ENCODE measurements at regions of chr4 and their contacts with region 1.

Region 1: DNA sequence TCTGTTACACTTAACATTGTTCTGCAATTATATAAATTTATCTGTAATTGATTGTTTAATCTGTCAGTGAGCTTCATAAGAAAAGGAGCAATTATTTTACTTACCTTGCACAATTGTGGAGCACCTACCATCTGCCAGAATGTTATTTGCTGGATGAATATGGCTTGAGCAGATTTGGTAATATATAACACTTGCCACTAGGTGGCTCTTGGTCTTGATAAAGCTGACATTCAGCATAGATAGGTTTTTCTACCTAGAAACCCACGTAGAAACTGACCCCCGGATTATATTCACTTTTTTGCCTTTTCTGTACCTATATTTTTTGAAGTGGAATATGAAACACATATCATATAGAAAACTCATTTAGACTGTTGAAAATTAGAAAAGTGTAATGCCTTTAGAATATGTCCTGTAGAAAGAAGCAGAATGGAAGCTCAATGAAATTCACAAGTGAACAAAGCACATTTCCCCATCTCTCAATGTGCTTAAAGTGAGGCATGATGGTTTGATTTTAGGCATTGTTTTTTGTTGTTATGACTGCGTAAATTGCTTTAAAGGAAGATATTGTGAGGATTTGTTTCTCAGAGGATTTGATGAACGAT is 9.5 kb downstream of the RBPJ start:
- DNase-seq: no peak
- ATAC-seq: peak; percentile 88
- H3K4me3 ChIP-seq: no peak overlapping the region
- H3K27ac ChIP-seq: no peak overlapping the region
- H3K4me1 ChIP-seq: no peaks in the 10 kb centered on the region
- H3K27me3 ChIP-seq: no peaks in the 10 kb centered on the region
- CTCF ChIP-seq: peak; percentile 53 to 66 (median 58)
- EP300 ChIP-seq: no peak
- POLR2A ChIP-seq: no peak
- RAD21 ChIP-seq: peak; percentile 71

Region 2: GRCh38 chr4:26028793-26029567 is 301.3 kb before region 1 on chr4:
- CTCF ChIA-PET with region 1: interaction called, 18 read pairs
- POLR2A ChIA-PET with region 1: no interaction called
- RAD21 ChIA-PET with region 1: interaction called, 15 read pairs
- SMC1A ChIA-PET with region 1: interaction called, 17 read pairs
- in situ Hi-C with region 1: no loop called
- intact Hi-C with region 1: no loop called
- DNase-seq: no peak
- ATAC-seq: peak; percentile 99
- H3K4me3 ChIP-seq: no peak overlapping the region
- H3K27ac ChIP-seq: no peak overlapping the region
- H3K4me1 ChIP-seq: peaks cover 4% of the 10 kb centered on the region
- H3K27me3 ChIP-seq: no peaks in the 10 kb centered on the region
- CTCF ChIP-seq: peak; percentile 75 to 89 (median 85)
- EP300 ChIP-seq: no peak
- POLR2A ChIP-seq: no peak
- RAD21 ChIP-seq: peak; percentile 93

Region 3: GRCh38 chr4:26076000-26076587 is 254.2 kb before region 1 on chr4:
- CTCF ChIA-PET with region 1: interaction called, 14 read pairs
- POLR2A ChIA-PET with region 1: interaction called, 6 read pairs
- RAD21 ChIA-PET with region 1: interaction called, 37 read pairs
- SMC1A ChIA-PET with region 1: interaction called, 12 read pairs
- in situ Hi-C with region 1: no loop called
- intact Hi-C with region 1: no loop called
- DNase-seq: peak; percentile 84
- ATAC-seq: peak; percentile 75
- H3K4me3 ChIP-seq: no peak overlapping the region
- H3K27ac ChIP-seq: peak overlapping the region; percentile 57
- H3K4me1 ChIP-seq: peaks cover 35% of the 10 kb centered on the region
- H3K27me3 ChIP-seq: no peaks in the 10 kb centered on the region
- CTCF ChIP-seq: no peak
- EP300 ChIP-seq: peak; percentile 70 to 90
- POLR2A ChIP-seq: no peak
- RAD21 ChIP-seq: no peak

Region 4: GRCh38 chr4:26372525-26373172 is 42.4 kb after region 1 on chr4:
- CTCF ChIA-PET with region 1: interaction called, 15 read pairs
- POLR2A ChIA-PET with region 1: no interaction called
- RAD21 ChIA-PET with region 1: interaction called, 5 read pairs
- SMC1A ChIA-PET with region 1: no interaction called
- in situ Hi-C with region 1: no loop called
- intact Hi-C with region 1: no loop called
- DNase-seq: peak; percentile 83
- ATAC-seq: peak; percentile 93
- H3K4me3 ChIP-seq: no peak overlapping the region
- H3K27ac ChIP-seq: no peak overlapping the region
- H3K4me1 ChIP-seq: peaks cover 15% of the 10 kb centered on the region
- H3K27me3 ChIP-seq: no peaks in the 10 kb centered on the region
- CTCF ChIP-seq: no peak
- EP300 ChIP-seq: peak; percentile 27 to 47; a peak in 1 of 4 replicates
- POLR2A ChIP-seq: no peak
- RAD21 ChIP-seq: no peak

Region 5: DNA sequence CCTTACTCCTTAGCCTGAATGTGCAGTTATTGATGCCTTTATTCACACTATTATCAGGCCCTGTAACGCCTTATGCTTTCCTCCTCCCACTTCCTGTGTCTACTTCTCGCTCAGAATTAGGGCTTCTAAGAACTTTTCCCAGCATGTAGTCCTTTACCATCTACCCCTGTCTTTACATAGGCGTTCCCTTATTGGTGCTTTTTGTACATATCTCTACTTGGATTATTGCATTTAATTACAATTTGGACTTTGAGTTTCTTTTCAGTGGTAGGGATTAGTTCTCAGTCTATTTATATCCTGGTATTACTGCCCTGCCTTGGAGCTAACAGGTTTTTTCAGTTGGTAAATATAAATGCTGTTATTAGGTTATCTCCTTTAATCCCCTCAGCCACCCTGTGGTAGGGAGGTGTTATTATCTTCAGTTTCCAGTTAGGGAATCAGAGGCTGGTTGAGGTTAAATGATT is 74.5 kb after region 1 on chr4:
- CTCF ChIA-PET with region 1: interaction called, 474 read pairs
- POLR2A ChIA-PET with region 1: interaction called, 3 read pairs
- RAD21 ChIA-PET with region 1: interaction called, 170 read pairs
- SMC1A ChIA-PET with region 1: interaction called, 175 read pairs
- in situ Hi-C with region 1: loop called (anchors 5 kb)
- intact Hi-C with region 1: no loop called
- DNase-seq: no peak
- ATAC-seq: no peak
- H3K4me3 ChIP-seq: no peak overlapping the region
- H3K27ac ChIP-seq: no peak overlapping the region
- H3K4me1 ChIP-seq: peaks cover 10% of the 10 kb centered on the region
- H3K27me3 ChIP-seq: no peaks in the 10 kb centered on the region
- CTCF ChIP-seq: no peak
- EP300 ChIP-seq: no peak
- POLR2A ChIP-seq: no peak
- RAD21 ChIP-seq: no peak